ENCODE measurements at regions of chr3 and their contacts with region 1.

Region 1: DNA sequence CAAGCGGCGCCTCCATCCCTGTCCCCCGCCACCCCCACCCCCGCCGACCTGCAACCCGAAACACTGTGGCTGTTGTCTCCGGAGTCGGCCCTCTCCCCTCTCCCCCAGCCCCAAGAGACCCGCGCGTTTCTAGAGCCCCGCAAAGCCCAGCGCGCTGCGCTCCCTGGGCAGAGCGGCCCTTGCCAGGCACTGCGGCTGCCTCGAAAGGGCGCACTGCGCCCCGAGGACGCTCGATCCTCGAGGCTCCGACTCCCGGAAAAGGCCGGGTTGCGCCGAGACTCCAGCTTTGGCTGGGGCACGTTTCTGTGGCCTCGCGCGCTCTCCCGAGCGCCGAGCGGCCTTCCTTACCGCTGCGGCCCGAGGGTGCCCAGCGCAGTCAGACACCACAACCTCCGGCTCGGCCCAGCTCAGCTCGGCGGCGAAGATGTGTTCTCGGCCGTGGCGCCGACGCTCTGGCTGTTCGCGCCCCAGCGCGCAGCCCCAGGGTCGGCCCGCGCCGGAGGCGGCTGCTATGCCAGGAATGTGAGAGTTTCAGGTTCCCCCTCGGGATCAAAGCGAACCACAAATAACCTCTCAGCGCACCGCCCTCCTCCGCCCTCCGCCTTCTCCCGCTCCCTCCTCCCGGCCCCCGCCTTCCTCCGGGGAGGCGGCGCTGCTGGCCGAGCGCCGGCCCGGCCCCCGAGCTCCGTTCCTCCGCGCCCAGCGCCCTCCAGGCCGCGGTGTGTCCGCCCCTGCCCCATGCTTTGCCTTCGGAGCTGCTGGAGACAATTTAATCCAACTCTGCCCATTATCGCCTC is at the start of gene AMOTL2:
- DNase-seq: peak in 1 of 9 donors; percentile 23
- ATAC-seq: peak; percentile 39
- H3K4me3 ChIP-seq: peak within 1 kb of the TSS; percentile 41
- H3K4me3 Mint-ChIP-seq: peak within 1 kb of the TSS; percentile 78 to 90 (median 84)
- H3K27ac ChIP-seq: no peak within 1 kb of the TSS
- H3K27ac Mint-ChIP-seq: no peak within 1 kb of the TSS
- H3K4me1 ChIP-seq: no peaks in the 10 kb centered on the region
- H3K4me1 Mint-ChIP-seq: peaks cover 7 to 13% (median 11%) of the 10 kb centered on the region in 7 donors
- H3K27me3 ChIP-seq: peaks cover 0 to 3% of the 10 kb centered on the region in 2 donors
- H3K27me3 Mint-ChIP-seq: peaks cover 22 to 63% (median 37%) of the 10 kb centered on the region in 5 donors
- total RNA-seq, gene AMOTL2: not detected

Region 2: DNA sequence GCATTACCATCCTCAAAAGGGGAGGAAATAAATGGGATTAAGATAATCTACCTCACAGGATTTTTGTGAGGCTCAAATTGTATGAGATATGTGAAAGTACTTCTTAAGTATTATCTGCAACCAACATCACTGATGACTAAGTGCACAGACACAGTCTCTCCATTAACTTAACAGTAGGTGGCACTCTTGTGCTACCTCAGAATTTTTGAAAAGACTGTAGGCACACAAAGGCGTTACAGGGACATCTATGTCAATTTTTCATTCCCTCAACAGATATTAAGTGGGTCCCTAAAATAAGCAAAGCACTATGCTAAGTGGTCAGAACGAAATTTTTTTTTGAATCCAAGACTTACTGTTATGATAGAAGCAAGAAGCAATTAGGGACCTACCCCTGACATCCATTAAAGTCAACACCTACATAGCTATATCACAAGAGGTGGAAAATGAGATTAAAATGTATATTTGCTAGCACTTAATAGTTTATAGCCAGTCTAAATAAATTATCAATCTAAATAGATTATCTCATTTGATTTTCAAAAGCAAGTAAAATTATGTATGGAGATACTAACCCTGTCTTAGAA is 176.4 kb before region 1 on chr3:
- CTCF ChIA-PET with region 1: interaction called, 3 read pairs
- POLR2A ChIA-PET with region 1: no interaction called
- intact Hi-C with region 1: loop called (anchors 5 kb)
- DNase-seq: peak in 7 of 9 donors; percentile 24 to 55 (median 42)
- ATAC-seq: peak; percentile 83
- H3K4me3 ChIP-seq: no peak overlapping the region
- H3K4me3 Mint-ChIP-seq: no peak overlapping the region
- H3K27ac ChIP-seq: no peak overlapping the region
- H3K27ac Mint-ChIP-seq: no peak overlapping the region
- H3K4me1 ChIP-seq: no peaks in the 10 kb centered on the region
- H3K4me1 Mint-ChIP-seq: peaks cover 0 to 2% (median 0%) of the 10 kb centered on the region in 7 donors
- H3K27me3 ChIP-seq: no peaks in the 10 kb centered on the region
- H3K27me3 Mint-ChIP-seq: no peaks in the 10 kb centered on the region

Region 3: DNA sequence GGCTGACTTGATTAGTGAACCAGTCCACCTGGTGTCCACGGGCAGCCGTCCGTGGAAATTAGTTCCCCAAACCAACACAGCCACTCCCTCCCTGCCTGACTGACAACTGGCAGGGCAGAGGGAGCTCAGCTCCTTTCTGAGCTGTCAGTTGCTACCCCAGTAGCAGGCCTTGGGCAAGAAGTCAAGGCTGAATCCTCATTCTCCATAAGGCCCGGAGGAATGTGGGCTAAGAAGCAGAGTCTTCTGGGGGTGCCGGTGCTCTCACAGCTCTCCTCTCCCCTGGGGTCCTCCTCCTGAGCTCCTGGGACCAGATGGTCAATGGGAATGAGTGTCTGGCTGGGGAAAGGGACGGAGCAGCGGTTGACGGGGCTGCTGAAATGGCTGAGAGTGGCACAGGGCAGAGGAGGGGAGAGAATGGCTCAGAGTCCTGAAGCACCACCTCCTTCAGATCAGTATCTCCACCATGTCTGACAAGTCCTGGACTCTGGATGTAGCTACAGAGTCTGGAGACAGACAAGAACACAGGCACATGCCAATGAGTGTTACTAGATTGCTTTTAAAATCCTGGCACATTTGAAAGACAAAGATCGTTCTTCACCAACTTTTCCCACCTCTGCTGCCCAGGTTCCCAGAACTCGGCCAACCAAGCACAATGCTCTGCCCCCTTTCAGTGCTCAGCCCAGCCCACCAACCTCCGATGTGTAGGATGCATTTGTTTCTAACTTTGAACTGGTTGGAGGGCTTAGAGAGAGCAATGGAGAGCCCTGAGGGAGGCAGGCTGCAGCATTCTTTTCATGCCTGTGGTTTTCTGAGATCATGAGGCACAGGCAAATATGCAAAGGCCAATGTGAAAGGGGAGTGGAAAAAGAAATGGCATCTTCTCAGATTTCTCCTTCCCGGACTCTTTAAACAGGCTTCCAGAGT is 16.7 kb before region 1 on chr3:
- CTCF ChIA-PET with region 1: no interaction called
- POLR2A ChIA-PET with region 1: no interaction called
- intact Hi-C with region 1: loop called in 1 of 2 experiments (anchors 1 kb)
- DNase-seq: no peak
- ATAC-seq: no peak
- H3K4me3 ChIP-seq: no peak overlapping the region
- H3K4me3 Mint-ChIP-seq: no peak overlapping the region
- H3K27ac ChIP-seq: no peak overlapping the region
- H3K27ac Mint-ChIP-seq: no peak overlapping the region
- H3K4me1 ChIP-seq: no peaks in the 10 kb centered on the region
- H3K4me1 Mint-ChIP-seq: no peaks in the 10 kb centered on the region
- H3K27me3 ChIP-seq: no peaks in the 10 kb centered on the region
- H3K27me3 Mint-ChIP-seq: no peaks in the 10 kb centered on the region